ENCODE measurements at regions of chr15 and their contacts with region 1.

Region 1: DNA sequence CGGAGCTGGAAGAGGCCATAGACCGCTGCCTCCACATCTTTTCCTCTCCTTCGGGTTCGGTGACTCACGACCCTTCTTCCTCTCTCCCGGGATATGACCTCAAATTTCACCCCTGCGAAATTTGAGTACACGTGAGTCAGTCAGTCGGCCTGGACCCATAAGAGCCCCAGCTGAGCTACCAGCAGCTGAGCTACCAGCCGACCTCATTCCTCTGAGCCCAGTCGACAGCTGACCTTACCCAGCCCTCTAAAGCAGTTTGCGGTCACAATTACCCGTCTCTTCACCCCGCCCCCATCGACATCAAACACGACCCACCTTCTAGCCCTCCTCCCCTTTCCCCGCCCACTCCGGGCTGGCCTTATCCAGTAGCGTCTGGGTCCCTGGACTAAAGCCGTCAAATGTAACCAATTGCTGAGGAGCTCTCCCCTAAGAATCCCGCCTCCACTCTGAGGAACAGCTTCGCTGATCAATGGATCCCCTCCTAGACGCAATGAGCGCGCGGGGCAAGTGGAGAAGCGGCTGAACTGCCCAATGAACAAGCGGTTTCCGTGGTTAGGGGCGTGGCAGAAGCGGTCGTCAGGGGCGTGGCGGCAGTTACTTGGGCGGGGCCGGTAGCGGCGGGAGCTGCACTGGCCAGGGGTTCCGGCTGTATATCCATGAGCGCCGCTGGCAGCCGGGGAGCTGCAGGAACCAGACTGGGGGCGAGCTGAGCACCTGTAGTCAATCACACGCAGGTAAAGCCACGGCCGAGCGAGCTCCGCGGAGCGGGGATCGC is at the start of gene ABHD2:
- DNase-seq: peak; percentile 99
- H3K4me3 Mint-ChIP-seq: no peak within 1 kb of the TSS
- H3K27ac Mint-ChIP-seq: peak within 1 kb of the TSS; percentile 40
- H3K4me1 Mint-ChIP-seq: peaks cover 30% of the 10 kb centered on the region
- H3K27me3 Mint-ChIP-seq: no peaks in the 10 kb centered on the region
- total RNA-seq, gene ABHD2: 62.4 to 63.5 TPM

Region 2: GRCh38 chr15:89068325-89068784 is 19.7 kb before region 1 on chr15:
- CTCF ChIA-PET with region 1: interaction called, 10 read pairs
- POLR2A ChIA-PET with region 1: interaction called, 4 read pairs
- DNase-seq: peak; percentile 65
- H3K4me3 Mint-ChIP-seq: peak overlapping the region; percentile 5
- H3K27ac Mint-ChIP-seq: peak overlapping the region; percentile 68
- H3K4me1 Mint-ChIP-seq: peaks cover 21% of the 10 kb centered on the region
- H3K27me3 Mint-ChIP-seq: no peaks in the 10 kb centered on the region

Region 3: GRCh38 chr15:89112341-89112971 is 24.4 kb after region 1 on chr15:
- CTCF ChIA-PET with region 1: interaction called, 7 read pairs
- POLR2A ChIA-PET with region 1: interaction called, 21 read pairs
- DNase-seq: peak; percentile 34
- H3K4me3 Mint-ChIP-seq: no peak overlapping the region
- H3K27ac Mint-ChIP-seq: peak overlapping the region; percentile 37
- H3K4me1 Mint-ChIP-seq: peaks cover 19% of the 10 kb centered on the region
- H3K27me3 Mint-ChIP-seq: no peaks in the 10 kb centered on the region

Region 4: DNA sequence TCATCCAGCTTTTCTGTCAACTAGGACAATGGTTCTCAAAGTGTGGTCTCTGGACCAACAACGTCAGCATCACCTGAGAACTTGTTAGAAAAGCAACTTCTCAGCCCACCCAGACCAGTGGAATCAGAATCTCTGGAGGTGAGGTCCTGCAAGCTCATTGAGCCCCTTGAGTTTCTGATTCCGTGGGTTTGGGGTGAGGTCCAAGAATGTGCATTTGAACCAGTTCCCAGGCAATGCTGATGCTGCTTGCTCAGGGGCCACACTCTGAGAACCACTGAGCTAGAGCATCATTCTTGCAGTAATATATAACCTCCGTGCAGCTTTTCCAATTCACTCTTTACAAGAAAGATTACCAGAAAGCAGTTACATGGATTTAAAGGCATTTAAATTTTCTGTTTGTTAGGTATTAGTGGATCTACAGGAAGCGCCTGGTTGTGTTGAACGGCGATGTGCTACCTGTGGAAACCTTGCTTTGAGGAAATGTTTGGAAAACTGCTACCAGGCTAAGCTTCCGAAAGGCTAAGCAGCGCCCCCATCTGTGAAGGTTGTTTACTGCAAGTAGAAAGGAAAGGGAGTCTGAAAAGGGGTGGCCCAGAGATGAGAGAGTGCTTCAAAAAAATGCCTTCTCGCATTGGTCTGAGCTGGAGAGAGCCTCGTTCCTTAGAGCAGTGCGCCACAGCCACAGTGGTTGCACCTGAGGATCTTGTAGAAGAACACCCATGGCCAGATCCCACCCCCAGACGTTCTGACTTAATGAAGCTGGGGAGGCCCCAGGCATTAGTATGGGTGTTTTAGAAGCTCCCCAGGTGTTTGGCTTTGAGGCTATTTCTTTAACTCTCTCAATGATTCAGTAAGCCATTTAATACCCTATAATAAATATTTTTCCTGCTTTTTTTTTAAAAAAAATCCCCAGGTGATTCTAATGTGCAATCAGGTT is 83.4 kb after region 1 on chr15:
- CTCF ChIA-PET with region 1: interaction called, 46 read pairs
- POLR2A ChIA-PET with region 1: interaction called, 13 read pairs
- DNase-seq: peak; percentile 39
- H3K4me3 Mint-ChIP-seq: no peak overlapping the region
- H3K27ac Mint-ChIP-seq: no peak overlapping the region
- H3K4me1 Mint-ChIP-seq: peaks cover 13% of the 10 kb centered on the region
- H3K27me3 Mint-ChIP-seq: no peaks in the 10 kb centered on the region

Region 5: GRCh38 chr15:89243691-89244471 is 155.9 kb after region 1 on chr15 and contains the start of gene FANCI:
- CTCF ChIA-PET with region 1: interaction called, 7 read pairs
- POLR2A ChIA-PET with region 1: interaction called, 37 read pairs
- DNase-seq: peak; percentile 97
- H3K4me3 Mint-ChIP-seq: peak within 1 kb of the TSS; percentile 91
- H3K27ac Mint-ChIP-seq: peak within 1 kb of the TSS; percentile 86
- H3K4me1 Mint-ChIP-seq: peaks cover 43% of the 10 kb centered on the region
- H3K27me3 Mint-ChIP-seq: peaks cover 5% of the 10 kb centered on the region
- total RNA-seq, gene FANCI: 196 TPM